Testis (tissue), 5 donors: ENCODE measurements at regions of chr20 and their contacts with region 1.

Region 1: GRCh38 chr20:37527638-37528441 is at the start of gene BLCAP:
- DNase-seq: peak; percentile 94
- H3K4me3 ChIP-seq: peak within 1 kb of the TSS; percentile 94 to 100
- H3K27ac ChIP-seq: peak within 1 kb of the TSS; percentile 90 to 96
- H3K4me1 ChIP-seq: peaks cover 20% of the 10 kb centered on the region
- H3K27me3 ChIP-seq: no peaks in the 10 kb centered on the region
- CTCF ChIP-seq: peak in 1 of 3 experiments; percentile 2
- POLR2A ChIP-seq: no peak
- total RNA-seq, gene BLCAP: 80.0 to 83.6 TPM

Region 2: GRCh38 chr20:37282556-37282955 is 245.3 kb before region 1 on chr20:
- intact Hi-C with region 1: loop called (anchors 5 kb)
- DNase-seq: peak; percentile 71
- H3K4me3 ChIP-seq: no peak overlapping the region
- H3K27ac ChIP-seq: no peak overlapping the region
- H3K4me1 ChIP-seq: peaks cover 1% of the 10 kb centered on the region
- H3K27me3 ChIP-seq: no peaks in the 10 kb centered on the region
- CTCF ChIP-seq: peak; percentile 22 to 74 (median 55)
- POLR2A ChIP-seq: no peak

Region 3: GRCh38 chr20:37406010-37406998 is 121.5 kb before region 1 on chr20:
- intact Hi-C with region 1: loop called (anchors 10 kb)
- DNase-seq: peak; percentile 56
- H3K4me3 ChIP-seq: peak overlapping the region; percentile 4 to 41
- H3K27ac ChIP-seq: no peak overlapping the region
- H3K4me1 ChIP-seq: peaks cover 7% of the 10 kb centered on the region
- H3K27me3 ChIP-seq: no peaks in the 10 kb centered on the region
- CTCF ChIP-seq: no peak
- POLR2A ChIP-seq: no peak

Region 4: DNA sequence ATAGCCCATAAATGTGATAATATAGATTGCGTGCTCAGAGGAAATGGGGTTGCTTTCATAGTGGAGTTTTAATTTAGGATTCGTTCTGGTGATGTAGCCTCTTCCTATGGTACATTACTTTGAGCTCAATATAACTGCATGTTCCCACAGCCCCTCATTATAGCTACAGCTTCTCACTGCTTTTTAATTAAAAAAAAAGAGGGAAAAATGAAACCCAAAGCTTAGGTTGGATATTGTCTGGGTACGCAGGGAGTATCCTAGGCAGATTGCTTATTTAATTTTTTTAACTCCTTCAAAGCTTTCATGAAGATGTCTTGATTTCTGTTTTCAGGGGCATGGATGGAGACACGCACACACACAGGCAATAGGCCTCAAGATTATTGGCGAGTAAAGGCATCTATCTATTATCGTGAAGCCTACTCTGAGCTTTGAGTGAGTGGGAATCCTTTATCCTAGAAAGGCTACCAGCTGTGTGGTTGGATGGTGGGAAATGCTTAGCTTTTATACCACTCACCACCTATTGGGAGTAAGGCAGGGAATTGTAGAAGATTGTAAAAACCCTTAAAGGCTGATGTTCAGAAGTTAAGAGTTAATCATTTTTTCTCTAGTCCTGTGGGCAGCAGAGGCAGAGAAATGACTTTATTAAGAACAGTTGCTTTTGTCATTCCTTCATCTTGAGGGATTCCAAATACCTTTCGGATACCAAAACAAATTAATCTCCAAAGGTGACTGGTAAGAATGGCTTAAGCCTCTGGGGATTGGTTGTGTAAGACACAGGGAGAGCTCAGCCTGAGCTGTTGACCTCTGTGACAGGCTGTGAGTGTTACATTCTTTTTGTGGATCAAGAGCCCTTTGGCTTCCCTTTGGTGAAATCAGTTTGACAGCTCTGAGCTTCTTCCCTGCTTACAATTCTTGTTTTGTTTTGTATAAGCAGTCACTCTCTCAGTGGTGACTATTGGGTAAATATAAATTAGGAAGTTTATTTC is 199.4 kb after region 1 on chr20:
- intact Hi-C with region 1: no loop called
- DNase-seq: no peak
- H3K4me3 ChIP-seq: no peak overlapping the region
- H3K27ac ChIP-seq: no peak overlapping the region
- H3K4me1 ChIP-seq: no peaks in the 10 kb centered on the region
- H3K27me3 ChIP-seq: no peaks in the 10 kb centered on the region
- CTCF ChIP-seq: no peak
- POLR2A ChIP-seq: no peak

Region 5: GRCh38 chr20:39097889-39098288 is 1570.0 kb after region 1 on chr20:
- intact Hi-C with region 1: no loop called
- DNase-seq: no peak
- H3K4me3 ChIP-seq: no peak overlapping the region
- H3K27ac ChIP-seq: no peak overlapping the region
- H3K4me1 ChIP-seq: no peaks in the 10 kb centered on the region
- H3K27me3 ChIP-seq: no peaks in the 10 kb centered on the region
- CTCF ChIP-seq: no peak
- POLR2A ChIP-seq: no peak